ENCODE measurements at regions of chr5 and their contacts with region 1.

Region 1: DNA sequence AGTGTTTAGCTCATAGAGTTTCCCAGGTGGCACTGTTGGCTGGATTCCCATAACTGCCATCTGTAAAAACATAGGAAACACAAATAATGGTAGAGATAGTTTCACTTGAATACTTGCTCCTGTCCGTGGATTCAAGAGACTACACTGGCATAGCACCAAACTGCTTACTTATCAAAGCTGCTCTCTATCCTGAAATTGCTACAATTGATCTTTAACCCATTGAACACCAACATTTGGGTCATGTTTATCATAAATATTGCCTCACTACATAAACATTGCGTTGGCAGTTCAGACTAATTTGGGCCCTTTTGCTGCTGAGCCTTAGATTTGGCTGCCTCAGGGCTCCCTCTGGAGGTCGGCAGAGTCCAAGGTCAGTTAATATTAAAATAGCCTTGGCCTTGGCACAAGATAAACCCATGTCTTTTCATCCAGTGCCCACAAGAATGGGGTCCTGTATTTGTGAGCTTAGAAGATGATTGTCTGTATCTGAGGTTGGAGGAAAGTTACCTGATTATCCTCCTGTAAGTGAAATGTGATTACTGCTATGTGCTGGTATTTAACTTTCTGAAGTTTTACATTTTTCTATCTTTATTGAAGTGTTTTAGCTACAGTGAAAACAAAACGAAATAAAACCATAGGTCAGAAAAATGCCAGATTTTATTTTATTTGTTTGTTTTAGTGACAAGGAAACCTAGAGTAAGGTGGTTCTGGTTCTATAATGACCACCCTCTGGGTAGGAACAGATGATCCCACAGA is 4.0 kb upstream of the RANBP3L start:
- DNase-seq: peak; percentile 72
- H3K4me3 ChIP-seq: no peak overlapping the region
- H3K27ac ChIP-seq: no peak overlapping the region
- H3K4me1 ChIP-seq: peaks cover 32% of the 10 kb centered on the region
- CTCF ChIP-seq: peak; percentile 93

Region 2: DNA sequence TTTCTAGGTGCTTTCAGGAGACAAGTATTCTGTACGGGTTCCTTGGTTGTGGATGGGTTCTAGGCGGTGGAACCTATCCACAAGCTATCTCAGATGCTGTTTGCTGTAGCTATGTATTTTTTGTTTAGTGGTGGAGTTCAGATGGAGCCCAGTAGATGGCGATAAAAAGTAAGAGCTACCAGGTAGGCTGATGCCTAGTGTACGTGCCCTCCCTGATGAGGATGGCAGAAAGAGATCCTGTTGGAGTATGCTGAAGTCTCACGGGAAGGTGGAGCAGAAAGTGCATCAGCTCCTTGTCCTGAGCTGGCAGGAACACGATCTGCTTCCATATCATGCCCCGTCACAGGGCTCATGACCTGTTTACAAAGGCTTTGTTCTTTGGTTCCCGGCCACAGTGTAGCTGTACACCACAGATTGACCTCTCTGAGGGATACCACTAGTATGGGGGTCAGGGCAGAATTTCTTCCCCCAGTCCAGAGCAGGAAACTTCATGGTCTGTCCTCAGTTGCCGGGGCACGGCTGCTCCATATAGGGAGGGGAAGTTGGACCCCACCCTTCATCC is 226.5 kb before region 1 on chr5:
- CTCF ChIA-PET with region 1: interaction called, 6 read pairs
- POLR2A ChIA-PET with region 1: interaction called, 3 read pairs
- intact Hi-C with region 1: loop called (anchors 1 kb)
- DNase-seq: peak; percentile 63
- H3K4me3 ChIP-seq: no peak overlapping the region
- H3K27ac ChIP-seq: no peak overlapping the region
- H3K4me1 ChIP-seq: no peaks in the 10 kb centered on the region
- CTCF ChIP-seq: peak; percentile 87

Region 3: GRCh38 chr5:36177715-36178523 is 127.8 kb before region 1 on chr5:
- CTCF ChIA-PET with region 1: no interaction called
- POLR2A ChIA-PET with region 1: no interaction called
- intact Hi-C with region 1: loop called (anchors 1 kb)
- DNase-seq: peak; percentile 57
- H3K4me3 ChIP-seq: no peak overlapping the region
- H3K27ac ChIP-seq: no peak overlapping the region
- H3K4me1 ChIP-seq: peaks cover 14% of the 10 kb centered on the region
- CTCF ChIP-seq: peak; percentile 90

Region 4: DNA sequence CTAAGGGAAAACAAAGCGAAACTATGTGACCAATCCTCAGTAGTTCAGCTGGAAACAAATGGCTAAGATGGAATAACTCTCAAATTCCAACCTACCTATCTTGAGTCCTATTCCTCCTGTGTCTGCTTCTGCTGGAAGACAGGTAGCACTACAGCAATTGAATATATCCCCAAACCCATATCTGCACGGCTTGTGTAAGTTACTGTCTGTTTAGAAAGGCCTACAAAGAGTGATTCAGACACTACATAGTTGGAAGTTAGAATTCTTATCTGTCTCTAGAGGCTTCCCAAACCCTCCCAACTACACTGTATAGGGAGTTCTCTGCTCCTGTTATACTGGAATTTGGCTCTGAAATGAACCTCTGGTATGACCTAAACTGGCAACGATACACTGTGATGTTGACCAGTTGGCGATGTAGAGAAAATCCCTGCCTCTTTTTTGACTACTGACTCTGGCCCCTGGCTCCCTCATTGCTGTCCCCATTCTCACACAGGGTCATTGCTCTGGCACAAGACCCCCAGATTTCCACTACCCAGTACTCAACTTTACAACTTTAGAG is 41.5 kb before region 1 on chr5:
- CTCF ChIA-PET with region 1: interaction called, 3 read pairs
- POLR2A ChIA-PET with region 1: interaction called, 3 read pairs
- intact Hi-C with region 1: loop called (anchors 1 kb)
- DNase-seq: no peak
- H3K4me3 ChIP-seq: no peak overlapping the region
- H3K27ac ChIP-seq: no peak overlapping the region
- H3K4me1 ChIP-seq: peaks cover 28% of the 10 kb centered on the region
- CTCF ChIP-seq: no peak